K562 (cell line): ENCODE measurements at regions of chr17 and their contacts with region 1.

Region 1: GRCh38 chr17:22142091-22142490 is 449.8 kb downstream of the KCNJ18 start:
- DNase-seq: peak in 2 of 4 experiments; percentile 20 to 82
- ATAC-seq: peak; percentile 79
- H3K4me3 ChIP-seq: no peak overlapping the region
- H3K27ac ChIP-seq: peak overlapping the region; percentile 55; the same call in 1 of the 3 replicates
- H3K4me1 ChIP-seq: peaks cover 0 to 4% of the 10 kb centered on the region in 2 experiments; a peak in 1 of 5 replicates
- H3K27me3 ChIP-seq: no peaks in the 10 kb centered on the region
- CTCF ChIP-seq: no peak
- EP300 ChIP-seq: peak; percentile 19; the same call in 1 of the 2 replicates
- POLR2A ChIP-seq: no peak
- RAD21 ChIP-seq: no peak

Region 2: GRCh38 chr17:21774263-21774662 is 367.8 kb before region 1 on chr17:
- CTCF ChIA-PET with region 1: no interaction called
- POLR2A ChIA-PET with region 1: no interaction called
- in situ Hi-C with region 1: no loop called
- intact Hi-C with region 1: no loop called
- DNase-seq: no peak
- ATAC-seq: no peak
- H3K4me3 ChIP-seq: no peak overlapping the region
- H3K27ac ChIP-seq: no peak overlapping the region
- H3K4me1 ChIP-seq: peaks cover 0 to 6% of the 10 kb centered on the region in 2 experiments; a peak in 1 of 5 replicates
- H3K27me3 ChIP-seq: no peaks in the 10 kb centered on the region
- CTCF ChIP-seq: no peak
- EP300 ChIP-seq: no peak
- POLR2A ChIP-seq: no peak
- RAD21 ChIP-seq: no peak

Region 3: DNA sequence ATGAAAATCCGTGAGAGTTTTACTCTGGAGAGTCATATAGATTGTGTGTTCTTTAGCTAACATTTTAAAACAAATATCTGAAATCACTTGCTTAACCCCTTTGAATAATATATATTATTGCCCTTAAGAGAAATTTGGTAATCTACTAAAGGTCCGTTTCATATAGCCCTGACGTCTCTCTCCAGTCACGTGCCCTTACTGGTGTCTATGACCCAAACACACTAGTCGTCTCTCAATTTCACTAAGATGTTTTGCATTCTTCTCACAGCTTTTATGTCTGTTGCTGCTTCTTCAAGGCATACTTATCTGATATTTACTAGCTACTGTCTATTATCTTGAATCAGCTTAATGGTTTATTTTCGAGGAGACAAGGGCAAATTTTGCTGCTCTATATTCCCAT is 39.9 kb before region 1 on chr17:
- CTCF ChIA-PET with region 1: no interaction called
- POLR2A ChIA-PET with region 1: no interaction called
- in situ Hi-C with region 1: no loop called
- intact Hi-C with region 1: loop called (anchors 5 kb)
- DNase-seq: no peak
- ATAC-seq: peak; percentile 65
- H3K4me3 ChIP-seq: no peak overlapping the region
- H3K27ac ChIP-seq: no peak overlapping the region
- H3K4me1 ChIP-seq: no peaks in the 10 kb centered on the region; a peak in 3 of 5 replicates
- H3K27me3 ChIP-seq: no peaks in the 10 kb centered on the region
- CTCF ChIP-seq: no peak
- EP300 ChIP-seq: no peak
- POLR2A ChIP-seq: no peak
- RAD21 ChIP-seq: no peak

Region 4: GRCh38 chr17:22158364-22158763 is 16.3 kb after region 1 on chr17:
- CTCF ChIA-PET with region 1: no interaction called
- POLR2A ChIA-PET with region 1: interaction called, 4 read pairs
- in situ Hi-C with region 1: no loop called
- intact Hi-C with region 1: loop called (anchors 2 kb)
- DNase-seq: no peak
- ATAC-seq: peak; percentile 61
- H3K4me3 ChIP-seq: no peak overlapping the region
- H3K27ac ChIP-seq: no peak overlapping the region; the same call in 2 of the 3 replicates
- H3K4me1 ChIP-seq: no peaks in the 10 kb centered on the region
- H3K27me3 ChIP-seq: no peaks in the 10 kb centered on the region
- CTCF ChIP-seq: no peak
- EP300 ChIP-seq: no peak
- POLR2A ChIP-seq: no peak
- RAD21 ChIP-seq: no peak

Region 5: GRCh38 chr17:22320286-22320685 is 178.2 kb after region 1 on chr17:
- CTCF ChIA-PET with region 1: no interaction called
- POLR2A ChIA-PET with region 1: no interaction called
- in situ Hi-C with region 1: no loop called
- intact Hi-C with region 1: no loop called
- DNase-seq: no peak
- ATAC-seq: no peak
- H3K4me3 ChIP-seq: no peak overlapping the region
- H3K27ac ChIP-seq: no peak overlapping the region
- H3K4me1 ChIP-seq: peaks cover 3 to 6% of the 10 kb centered on the region in 2 experiments; a peak in 4 of 5 replicates
- H3K27me3 ChIP-seq: no peaks in the 10 kb centered on the region
- CTCF ChIP-seq: no peak
- EP300 ChIP-seq: no peak
- POLR2A ChIP-seq: no peak
- RAD21 ChIP-seq: no peak